ENCODE measurements at regions of chr1 and their contacts with region 1.

Region 1: DNA sequence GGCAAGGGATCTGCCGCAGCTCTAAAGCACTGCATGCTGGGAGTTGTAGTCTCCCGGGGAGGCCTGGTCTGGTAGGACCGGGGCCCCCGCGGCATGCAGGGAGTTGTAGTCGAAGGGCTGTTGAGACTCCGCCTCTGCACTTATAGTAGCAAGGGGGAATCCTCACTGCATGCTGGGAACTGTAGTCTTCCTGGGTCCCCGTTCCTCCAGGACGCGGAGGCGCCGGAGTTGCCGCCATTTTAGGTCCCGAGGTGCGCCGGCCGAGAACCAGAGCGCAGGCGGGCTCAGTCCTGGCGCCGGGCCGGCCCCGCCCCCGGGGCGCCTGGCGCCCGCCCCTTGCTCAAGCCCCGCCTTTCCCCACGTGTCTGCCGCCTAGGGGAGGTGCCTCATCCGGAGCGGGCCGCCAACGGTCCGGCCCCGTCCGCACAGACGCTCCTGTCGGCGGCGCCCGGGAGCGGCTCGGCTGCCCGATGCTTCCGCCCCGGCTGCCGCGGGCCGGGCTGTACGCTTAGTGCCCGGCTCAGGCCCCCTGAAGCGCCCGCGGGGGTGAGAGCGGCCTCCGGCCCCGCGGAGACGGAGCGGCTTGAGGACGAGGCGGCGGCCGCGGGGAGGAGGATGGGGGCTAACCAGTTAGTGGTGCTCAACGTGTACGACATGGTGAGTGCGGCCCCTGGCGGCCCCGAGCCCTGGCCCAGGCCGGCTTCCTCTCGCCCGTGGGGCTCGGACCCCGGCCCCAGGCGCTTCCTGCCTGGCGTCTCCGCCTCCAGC is at the start of gene DESI2:
- DNase-seq: peak; percentile 98
- H3K4me3 Mint-ChIP-seq: peak within 1 kb of the TSS; percentile 79
- H3K27ac Mint-ChIP-seq: peak within 1 kb of the TSS; percentile 79
- H3K4me1 Mint-ChIP-seq: peaks cover 22% of the 10 kb centered on the region
- H3K27me3 Mint-ChIP-seq: no peaks in the 10 kb centered on the region
- total RNA-seq, gene DESI2: 24.8 to 25.6 TPM

Region 2: GRCh38 chr1:244678697-244679096 is 25.8 kb after region 1 on chr1:
- CTCF ChIA-PET with region 1: no interaction called
- POLR2A ChIA-PET with region 1: no interaction called
- intact Hi-C with region 1: no loop called
- DNase-seq: no peak
- H3K4me3 Mint-ChIP-seq: no peak overlapping the region
- H3K27ac Mint-ChIP-seq: no peak overlapping the region
- H3K4me1 Mint-ChIP-seq: peaks cover 26% of the 10 kb centered on the region
- H3K27me3 Mint-ChIP-seq: no peaks in the 10 kb centered on the region

Region 3: DNA sequence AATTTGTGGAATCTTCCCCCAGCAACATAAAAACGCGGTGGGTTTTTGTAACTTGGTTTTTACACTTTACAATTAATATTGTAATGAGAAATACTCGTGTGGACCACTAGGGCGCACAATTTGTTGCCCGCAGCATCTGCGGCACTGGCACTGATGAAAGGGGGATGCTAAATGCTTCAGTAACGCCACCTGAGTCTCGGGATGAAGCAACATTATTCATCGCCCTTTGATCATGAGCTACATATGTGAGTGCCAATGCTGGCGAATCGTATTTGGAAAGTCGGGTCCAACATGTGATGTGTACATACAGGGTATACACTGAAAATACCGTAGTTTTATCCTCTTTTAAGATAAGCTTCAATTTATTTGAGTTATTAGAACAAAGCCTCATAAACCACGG is 148.4 kb after region 1 on chr1:
- CTCF ChIA-PET with region 1: interaction called, 6 read pairs
- POLR2A ChIA-PET with region 1: no interaction called
- intact Hi-C with region 1: loop called (anchors 1 kb)
- DNase-seq: peak; percentile 66
- H3K4me3 Mint-ChIP-seq: no peak overlapping the region
- H3K27ac Mint-ChIP-seq: no peak overlapping the region
- H3K4me1 Mint-ChIP-seq: peaks cover 2% of the 10 kb centered on the region
- H3K27me3 Mint-ChIP-seq: peaks cover 2% of the 10 kb centered on the region